A549 (cell line): ENCODE measurements at regions of chr19 and their contacts with region 1.

Region 1: GRCh38 chr19:58572818-58573657 is at the start of gene MZF1:
- DNase-seq: peak; percentile 100
- ATAC-seq: peak; percentile 64 to 81
- H3K4me3 ChIP-seq: peak within 1 kb of the TSS; percentile 67
- H3K27ac ChIP-seq: peak within 1 kb of the TSS; percentile 91
- H3K4me1 ChIP-seq: peaks cover 15% of the 10 kb centered on the region
- CTCF ChIP-seq: no peak
- EP300 ChIP-seq: no peak
- POLR2A ChIP-seq: peak; percentile 57
- RAD21 ChIP-seq: no peak
- polyA plus RNA-seq, gene MZF1: 19.5 and 20.3 TPM in 2 replicates

Region 2: GRCh38 chr19:58558623-58559274 is 14.3 kb before region 1 on chr19:
- CTCF ChIA-PET with region 1: interaction called, 8 read pairs
- POLR2A ChIA-PET with region 1: interaction called, 34 read pairs
- DNase-seq: peak; percentile 93 to 100
- ATAC-seq: peak; percentile 45 to 76
- H3K4me3 ChIP-seq: peak overlapping the region; percentile 78
- H3K27ac ChIP-seq: peak overlapping the region; percentile 95 to 99
- H3K4me1 ChIP-seq: peaks cover 37% of the 10 kb centered on the region
- CTCF ChIP-seq: no peak
- EP300 ChIP-seq: no peak
- POLR2A ChIP-seq: peak; percentile 68
- RAD21 ChIP-seq: no peak